ENCODE measurements at regions of chr6 and their contacts with region 1.

Region 1: DNA sequence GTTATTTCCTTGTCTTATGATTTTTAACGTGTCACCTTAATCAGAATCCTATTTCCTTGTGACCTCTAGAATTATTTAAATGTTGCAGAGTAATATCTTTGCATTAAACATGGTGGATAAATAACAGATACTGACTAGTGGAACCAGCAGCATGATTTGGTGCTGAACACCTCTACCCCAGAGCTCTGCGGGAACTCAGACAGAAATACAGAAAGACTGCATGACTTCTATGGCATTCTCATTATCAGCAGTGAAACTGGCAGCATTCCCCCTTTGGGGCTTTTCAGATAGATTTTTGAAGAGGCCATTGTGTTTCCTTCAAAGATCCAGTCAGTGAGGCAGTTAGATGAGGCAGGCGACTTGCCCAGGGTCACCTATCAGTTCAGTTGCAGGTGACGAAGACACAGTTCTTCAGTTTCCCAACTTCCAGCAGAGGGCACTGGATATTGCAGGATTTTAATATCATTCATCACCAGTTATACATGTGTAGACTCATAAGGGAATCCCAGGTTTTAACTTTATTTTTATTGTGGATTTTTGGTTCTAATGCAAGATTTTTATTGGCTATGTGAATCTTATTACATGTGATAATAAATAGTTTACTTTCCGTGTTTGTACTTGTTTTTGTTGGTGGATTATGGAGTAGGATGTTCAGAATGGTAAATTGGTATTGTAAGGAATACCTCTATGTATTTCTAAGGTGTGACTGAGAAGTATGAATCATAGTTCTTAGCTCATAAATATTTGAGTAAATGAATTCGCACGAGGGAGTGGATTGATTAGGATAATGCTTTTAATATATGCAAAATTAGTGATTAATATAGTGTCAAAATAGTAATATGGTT is 81.3 kb downstream of the AFDN start:
- DNase-seq: no peak
- ATAC-seq: peak; percentile 59

Region 2: GRCh38 chr6:168031411-168031971 is 123.4 kb after region 1 on chr6:
- intact Hi-C with region 1: no loop called
- DNase-seq: peak; percentile 68
- ATAC-seq: peak; percentile 48

Region 3: GRCh38 chr6:168117942-168118341 is 209.9 kb after region 1 on chr6:
- intact Hi-C with region 1: loop called (anchors 5 kb)
- DNase-seq: no peak
- ATAC-seq: no peak

Region 4: GRCh38 chr6:168134560-168135201 is 226.6 kb after region 1 on chr6:
- intact Hi-C with region 1: loop called (anchors 5 kb)
- DNase-seq: no peak
- ATAC-seq: no peak

Region 5: GRCh38 chr6:168150551-168151320 is 242.7 kb after region 1 on chr6:
- intact Hi-C with region 1: no loop called
- DNase-seq: no peak
- ATAC-seq: peak; percentile 19